HEK293T (cell line): ENCODE measurements at regions of chr22 and their contacts with region 1.

Region 1: DNA sequence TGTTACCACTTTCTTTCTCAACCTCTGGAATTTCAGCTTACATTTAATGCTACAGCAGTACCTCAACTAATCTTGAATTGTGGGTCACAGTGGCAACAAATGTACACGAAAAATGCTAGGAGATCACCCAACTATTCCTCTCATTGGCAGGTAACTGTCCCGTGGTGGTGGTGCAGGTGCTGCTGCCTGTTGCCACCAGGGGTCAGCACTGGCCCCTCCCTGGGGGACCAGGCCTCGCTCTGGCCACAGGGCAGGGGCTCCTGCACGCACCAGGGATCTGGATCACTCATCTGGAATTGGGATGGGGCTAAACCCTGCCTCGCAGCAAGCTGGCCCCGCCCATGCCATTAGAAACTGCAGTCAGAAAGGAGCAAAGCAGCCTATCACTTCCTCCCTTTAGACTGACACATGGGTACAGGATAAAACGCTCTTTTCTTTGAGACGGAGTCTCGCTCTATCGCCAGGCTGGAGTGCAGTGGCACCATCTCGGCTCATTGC is 6.9 kb upstream of the POLDIP3 start:
- DNase-seq: peak; percentile 88

Region 2: GRCh38 chr22:42317008-42317407 is 304.5 kb before region 1 on chr22:
- CTCF ChIA-PET with region 1: no interaction called
- POLR2A ChIA-PET with region 1: no interaction called
- DNase-seq: no peak

Region 3: GRCh38 chr22:42642806-42643633 is 21.5 kb after region 1 on chr22:
- CTCF ChIA-PET with region 1: interaction called, 11 read pairs
- POLR2A ChIA-PET with region 1: interaction called, 5 read pairs
- DNase-seq: no peak

Region 4: DNA sequence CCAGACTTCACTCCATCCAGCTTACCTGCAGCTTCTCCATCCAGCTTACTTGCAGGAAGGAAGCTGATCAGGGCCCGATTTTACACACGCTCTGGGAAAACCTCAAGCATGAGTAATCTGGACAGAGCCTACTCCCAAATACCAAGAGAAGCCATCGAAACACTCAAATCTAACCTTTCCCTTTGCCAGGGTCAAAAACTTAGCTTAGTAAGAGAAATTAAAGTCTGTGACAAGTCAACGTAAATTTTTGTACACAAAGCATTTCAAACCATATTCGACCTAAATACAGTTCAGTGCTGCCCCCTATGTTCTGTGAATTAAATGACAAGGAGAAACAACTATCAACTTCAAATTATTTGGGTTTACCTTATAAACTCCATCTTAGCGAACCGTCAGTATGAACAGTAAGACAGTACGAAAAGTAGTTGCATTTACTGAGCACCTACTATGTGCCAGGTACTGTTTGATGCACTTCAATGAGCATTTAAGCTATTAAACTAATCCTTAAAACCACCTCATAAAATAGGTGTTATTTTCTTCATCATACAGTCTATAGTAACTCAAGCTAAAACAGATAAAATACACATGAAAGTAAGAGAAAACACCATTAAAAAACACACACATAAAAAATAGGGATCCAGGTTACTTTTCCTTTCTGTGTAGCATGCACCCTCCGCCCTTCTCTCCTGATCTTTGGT is 198.7 kb after region 1 on chr22:
- CTCF ChIA-PET with region 1: interaction called, 13 read pairs
- POLR2A ChIA-PET with region 1: no interaction called
- DNase-seq: peak; percentile 41